GM12878 (cell line): ENCODE measurements at regions of chr10 and their contacts with region 1.

Region 1: DNA sequence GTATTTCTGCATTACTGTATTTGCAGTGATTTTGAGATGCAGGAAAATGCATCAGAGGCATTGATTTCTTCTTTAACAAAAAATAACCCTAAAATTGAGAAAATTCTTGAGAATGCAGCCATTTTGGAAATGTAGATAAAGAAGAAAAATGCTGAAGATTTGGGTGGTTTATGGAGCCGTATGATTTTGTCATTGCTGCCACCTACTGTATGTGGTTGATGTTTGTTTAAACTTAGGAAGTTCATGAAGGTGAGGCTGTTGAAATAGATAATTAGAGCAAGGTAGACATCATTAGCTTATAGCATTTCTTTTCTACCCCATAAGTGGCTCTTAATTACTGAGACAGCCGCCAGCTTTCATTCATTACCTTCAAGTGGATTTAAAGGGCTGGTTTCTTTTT is 92.1 kb upstream of the SAMD8 start:
- DNase-seq: no peak
- ATAC-seq: peak; percentile 78
- H3K4me3 ChIP-seq: no peak overlapping the region
- H3K27ac ChIP-seq: no peak overlapping the region
- H3K4me1 ChIP-seq: peaks cover 16% of the 10 kb centered on the region
- H3K27me3 ChIP-seq: no peaks in the 10 kb centered on the region
- CTCF ChIP-seq: peak; percentile 33 to 70 (median 43); a peak in 4 of 6 replicates
- EP300 ChIP-seq: no peak
- POLR2A ChIP-seq: no peak
- RAD21 ChIP-seq: peak; percentile 84

Region 2: DNA sequence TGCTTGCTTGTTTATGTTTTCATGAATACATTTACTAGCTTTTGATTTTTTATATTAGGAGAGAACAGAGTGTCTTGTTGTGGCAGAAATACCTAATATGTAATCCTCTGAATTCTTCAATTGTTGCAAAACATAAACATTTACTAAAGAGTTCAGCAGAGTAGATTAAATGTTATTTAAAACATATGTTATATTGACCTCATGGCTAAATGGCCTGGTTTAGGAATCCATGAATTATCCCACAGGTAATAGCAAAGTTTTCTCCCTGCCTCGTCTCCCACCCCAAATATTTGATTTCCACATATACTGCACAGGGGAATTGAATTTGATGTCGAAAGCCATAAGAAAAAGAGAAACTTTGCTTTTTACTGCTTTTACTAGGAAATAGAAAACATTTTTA is 756.5 kb before region 1 on chr10:
- CTCF ChIA-PET with region 1: interaction called, 22 read pairs
- POLR2A ChIA-PET with region 1: no interaction called
- RAD21 ChIA-PET with region 1: interaction called, 8 read pairs
- SMC1A ChIA-PET with region 1: interaction called, 29 read pairs
- in situ Hi-C with region 1: loop called (anchors 5 kb)
- intact Hi-C with region 1: loop called (anchors 1 kb)
- DNase-seq: no peak
- ATAC-seq: no peak
- H3K4me3 ChIP-seq: no peak overlapping the region
- H3K27ac ChIP-seq: no peak overlapping the region
- H3K4me1 ChIP-seq: no peaks in the 10 kb centered on the region
- H3K27me3 ChIP-seq: no peaks in the 10 kb centered on the region
- CTCF ChIP-seq: no peak
- EP300 ChIP-seq: no peak
- POLR2A ChIP-seq: no peak
- RAD21 ChIP-seq: no peak

Region 3: DNA sequence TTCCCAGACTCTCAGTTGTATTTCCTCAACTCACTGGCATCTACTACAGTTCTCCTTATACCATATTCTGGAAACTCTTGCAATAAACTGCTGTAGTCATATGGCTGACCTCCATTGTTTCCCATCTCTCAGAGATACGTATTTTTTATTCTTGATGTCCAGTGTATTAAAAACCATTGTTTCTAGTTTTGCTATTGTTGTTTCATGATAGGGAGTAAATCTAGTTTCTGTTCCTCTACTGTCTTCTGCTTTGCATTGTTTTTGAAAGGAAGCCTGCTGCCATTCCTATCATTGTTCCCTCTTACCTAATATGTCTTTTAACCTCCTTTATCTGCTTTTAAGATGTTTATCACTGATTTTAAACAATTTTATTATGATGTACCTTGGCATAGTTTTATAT is 613.4 kb before region 1 on chr10:
- CTCF ChIA-PET with region 1: no interaction called
- POLR2A ChIA-PET with region 1: no interaction called
- RAD21 ChIA-PET with region 1: no interaction called
- SMC1A ChIA-PET with region 1: no interaction called
- in situ Hi-C with region 1: no loop called
- intact Hi-C with region 1: no loop called
- DNase-seq: no peak
- ATAC-seq: peak; percentile 51; the same call in 2 of the 3 replicates
- H3K4me3 ChIP-seq: no peak overlapping the region
- H3K27ac ChIP-seq: no peak overlapping the region
- H3K4me1 ChIP-seq: no peaks in the 10 kb centered on the region
- H3K27me3 ChIP-seq: no peaks in the 10 kb centered on the region
- CTCF ChIP-seq: no peak
- EP300 ChIP-seq: no peak
- POLR2A ChIP-seq: no peak
- RAD21 ChIP-seq: no peak

Region 4: GRCh38 chr10:74589226-74589673 is 430.1 kb before region 1 on chr10:
- CTCF ChIA-PET with region 1: interaction called, 6 read pairs
- POLR2A ChIA-PET with region 1: no interaction called
- RAD21 ChIA-PET with region 1: interaction called, 5 read pairs
- SMC1A ChIA-PET with region 1: interaction called, 13 read pairs
- in situ Hi-C with region 1: no loop called
- intact Hi-C with region 1: loop called (anchors 5 kb)
- DNase-seq: peak; percentile 82
- ATAC-seq: peak; percentile 75
- H3K4me3 ChIP-seq: no peak overlapping the region
- H3K27ac ChIP-seq: no peak overlapping the region
- H3K4me1 ChIP-seq: peaks cover 23% of the 10 kb centered on the region
- H3K27me3 ChIP-seq: no peaks in the 10 kb centered on the region
- CTCF ChIP-seq: no peak
- EP300 ChIP-seq: peak; percentile 80 to 92
- POLR2A ChIP-seq: no peak
- RAD21 ChIP-seq: no peak

Region 5: GRCh38 chr10:74753442-74754211 is 265.7 kb before region 1 on chr10:
- CTCF ChIA-PET with region 1: interaction called, 35 read pairs
- POLR2A ChIA-PET with region 1: no interaction called
- RAD21 ChIA-PET with region 1: interaction called, 8 read pairs
- SMC1A ChIA-PET with region 1: interaction called, 42 read pairs
- in situ Hi-C with region 1: no loop called
- intact Hi-C with region 1: no loop called
- DNase-seq: no peak
- ATAC-seq: no peak
- H3K4me3 ChIP-seq: no peak overlapping the region
- H3K27ac ChIP-seq: no peak overlapping the region
- H3K4me1 ChIP-seq: peaks cover 4% of the 10 kb centered on the region; the same call in 1 of the 2 replicates
- H3K27me3 ChIP-seq: no peaks in the 10 kb centered on the region
- CTCF ChIP-seq: no peak
- EP300 ChIP-seq: no peak
- POLR2A ChIP-seq: no peak
- RAD21 ChIP-seq: no peak

Region 6: GRCh38 chr10:74888962-74889663 is 130.3 kb before region 1 on chr10:
- CTCF ChIA-PET with region 1: interaction called, 12 read pairs
- POLR2A ChIA-PET with region 1: interaction called, 3 read pairs
- RAD21 ChIA-PET with region 1: interaction called, 13 read pairs
- SMC1A ChIA-PET with region 1: interaction called, 26 read pairs
- in situ Hi-C with region 1: no loop called
- intact Hi-C with region 1: no loop called
- DNase-seq: no peak
- ATAC-seq: peak; percentile 77
- H3K4me3 ChIP-seq: no peak overlapping the region
- H3K27ac ChIP-seq: no peak overlapping the region
- H3K4me1 ChIP-seq: no peaks in the 10 kb centered on the region
- H3K27me3 ChIP-seq: no peaks in the 10 kb centered on the region
- CTCF ChIP-seq: peak in 2 of 3 experiments; percentile 26 to 39; a peak in 3 of 6 replicates
- EP300 ChIP-seq: no peak
- POLR2A ChIP-seq: no peak
- RAD21 ChIP-seq: peak; percentile 50

Region 7: DNA sequence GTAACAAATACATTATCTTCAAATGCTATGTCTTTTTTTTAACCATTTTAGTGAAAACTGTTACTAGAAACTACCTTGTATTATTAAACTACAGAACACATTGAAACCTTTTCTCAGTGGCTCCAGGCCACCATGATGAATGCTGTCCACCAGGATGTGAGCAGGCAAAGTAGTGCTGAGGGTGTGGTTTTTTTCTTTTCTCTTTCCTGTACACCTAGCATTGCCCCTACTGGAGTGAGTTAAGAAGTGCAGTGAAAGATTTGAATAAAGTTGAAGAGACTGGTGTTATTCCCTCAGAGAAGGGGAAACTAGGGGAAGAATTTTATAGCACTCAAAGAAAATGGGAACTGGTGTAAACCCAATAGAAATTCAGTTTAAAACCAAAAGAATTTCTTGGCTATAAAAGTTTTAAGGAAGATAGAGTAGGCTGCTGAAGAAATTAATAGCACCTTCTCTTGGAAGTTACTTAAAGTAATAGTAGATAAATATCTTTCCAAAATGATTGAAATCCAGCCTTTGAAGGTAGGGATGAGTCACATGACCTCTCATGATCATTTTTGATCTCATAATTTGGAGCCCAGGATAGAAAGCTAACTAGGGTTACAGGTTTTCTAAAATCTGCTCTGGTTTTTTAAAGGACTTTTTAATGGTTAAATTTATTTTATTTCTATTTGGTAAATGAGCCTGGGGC is 27.8 kb before region 1 on chr10:
- CTCF ChIA-PET with region 1: interaction called, 4 read pairs
- POLR2A ChIA-PET with region 1: no interaction called
- RAD21 ChIA-PET with region 1: interaction called, 3 read pairs
- SMC1A ChIA-PET with region 1: interaction called, 553 read pairs
- in situ Hi-C with region 1: no loop called
- intact Hi-C with region 1: no loop called
- DNase-seq: no peak
- ATAC-seq: peak; percentile 92
- H3K4me3 ChIP-seq: no peak overlapping the region
- H3K27ac ChIP-seq: no peak overlapping the region
- H3K4me1 ChIP-seq: peaks cover 7% of the 10 kb centered on the region
- H3K27me3 ChIP-seq: no peaks in the 10 kb centered on the region
- CTCF ChIP-seq: peak; percentile 34 to 54 (median 45)
- EP300 ChIP-seq: no peak
- POLR2A ChIP-seq: no peak
- RAD21 ChIP-seq: peak; percentile 51

Region 8: DNA sequence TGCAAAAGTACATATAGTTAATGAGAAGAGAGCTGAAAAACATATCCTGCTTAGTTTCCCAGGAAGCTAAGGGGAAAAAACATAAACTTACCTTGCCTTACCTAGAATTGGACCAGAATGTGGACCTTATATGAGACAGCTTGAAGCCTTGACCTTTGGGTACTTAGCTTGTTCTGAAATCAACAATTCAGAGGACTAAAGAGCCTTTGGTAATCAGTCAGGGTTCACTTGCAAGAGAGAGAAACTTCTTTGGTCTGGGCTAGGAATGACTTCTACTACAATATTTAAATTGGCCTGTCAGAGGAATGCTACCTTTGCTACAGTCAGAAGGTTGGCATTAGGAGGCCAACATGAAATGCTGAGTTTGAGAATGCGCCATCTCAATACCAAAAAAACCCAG is 117.0 kb after region 1 on chr10:
- CTCF ChIA-PET with region 1: no interaction called
- POLR2A ChIA-PET with region 1: no interaction called
- RAD21 ChIA-PET with region 1: no interaction called
- SMC1A ChIA-PET with region 1: no interaction called
- in situ Hi-C with region 1: no loop called
- intact Hi-C with region 1: no loop called
- DNase-seq: no peak
- ATAC-seq: peak; percentile 46
- H3K4me3 ChIP-seq: no peak overlapping the region
- H3K27ac ChIP-seq: no peak overlapping the region
- H3K4me1 ChIP-seq: peaks cover 12% of the 10 kb centered on the region
- H3K27me3 ChIP-seq: no peaks in the 10 kb centered on the region
- CTCF ChIP-seq: no peak
- EP300 ChIP-seq: no peak
- POLR2A ChIP-seq: no peak
- RAD21 ChIP-seq: no peak

Region 9: GRCh38 chr10:75235375-75236177 is 216.2 kb after region 1 on chr10 and contains the start of gene COMTD1:
- CTCF ChIA-PET with region 1: interaction called, 11 read pairs
- POLR2A ChIA-PET with region 1: no interaction called
- RAD21 ChIA-PET with region 1: interaction called, 4 read pairs
- SMC1A ChIA-PET with region 1: interaction called, 3 read pairs
- in situ Hi-C with region 1: no loop called
- intact Hi-C with region 1: no loop called
- DNase-seq: peak; percentile 47
- ATAC-seq: peak; percentile 75
- H3K4me3 ChIP-seq: peak within 1 kb of the TSS; percentile 86
- H3K27ac ChIP-seq: peak within 1 kb of the TSS; percentile 82
- H3K4me1 ChIP-seq: peaks cover 11% of the 10 kb centered on the region
- H3K27me3 ChIP-seq: no peaks in the 10 kb centered on the region
- CTCF ChIP-seq: peak; percentile 100; a peak in 5 of 6 replicates
- EP300 ChIP-seq: no peak
- POLR2A ChIP-seq: peak; percentile 67
- RAD21 ChIP-seq: peak; percentile 85
- polyA plus RNA-seq, gene COMTD1: 0.39 to 3.4 TPM

Region 10: GRCh38 chr10:75253281-75254220 is 234.2 kb after region 1 on chr10:
- CTCF ChIA-PET with region 1: no interaction called
- POLR2A ChIA-PET with region 1: no interaction called
- RAD21 ChIA-PET with region 1: no interaction called
- SMC1A ChIA-PET with region 1: no interaction called
- in situ Hi-C with region 1: no loop called
- intact Hi-C with region 1: no loop called
- DNase-seq: no peak
- ATAC-seq: no peak
- H3K4me3 ChIP-seq: no peak overlapping the region
- H3K27ac ChIP-seq: no peak overlapping the region
- H3K4me1 ChIP-seq: no peaks in the 10 kb centered on the region
- H3K27me3 ChIP-seq: no peaks in the 10 kb centered on the region
- CTCF ChIP-seq: no peak
- EP300 ChIP-seq: no peak
- POLR2A ChIP-seq: no peak
- RAD21 ChIP-seq: no peak

Region 11: GRCh38 chr10:75379212-75379724 is 359.9 kb after region 1 on chr10:
- CTCF ChIA-PET with region 1: no interaction called
- POLR2A ChIA-PET with region 1: no interaction called
- RAD21 ChIA-PET with region 1: no interaction called
- SMC1A ChIA-PET with region 1: no interaction called
- in situ Hi-C with region 1: no loop called
- intact Hi-C with region 1: no loop called
- DNase-seq: no peak
- ATAC-seq: no peak
- H3K4me3 ChIP-seq: no peak overlapping the region
- H3K27ac ChIP-seq: no peak overlapping the region
- H3K4me1 ChIP-seq: no peaks in the 10 kb centered on the region
- H3K27me3 ChIP-seq: peaks cover 0 to 3% of the 10 kb centered on the region in 2 experiments; a peak in 1 of 4 replicates
- CTCF ChIP-seq: no peak
- EP300 ChIP-seq: no peak
- POLR2A ChIP-seq: no peak
- RAD21 ChIP-seq: no peak